ENCODE measurements at regions of chr12 and their contacts with region 1.

Region 1: GRCh38 chr12:116673681-116674111 is 64.2 kb downstream of the SPRING1 start:
- DNase-seq: peak; percentile 45
- ATAC-seq: peak; percentile 15; the same call in 1 of the 2 replicates
- H3K4me3 ChIP-seq: no peak overlapping the region
- H3K27ac ChIP-seq: no peak overlapping the region
- H3K4me1 ChIP-seq: no peaks in the 10 kb centered on the region; the same call in 1 of the 2 replicates
- H3K27me3 ChIP-seq: no peaks in the 10 kb centered on the region
- CTCF ChIP-seq: peak; percentile 66

Region 2: DNA sequence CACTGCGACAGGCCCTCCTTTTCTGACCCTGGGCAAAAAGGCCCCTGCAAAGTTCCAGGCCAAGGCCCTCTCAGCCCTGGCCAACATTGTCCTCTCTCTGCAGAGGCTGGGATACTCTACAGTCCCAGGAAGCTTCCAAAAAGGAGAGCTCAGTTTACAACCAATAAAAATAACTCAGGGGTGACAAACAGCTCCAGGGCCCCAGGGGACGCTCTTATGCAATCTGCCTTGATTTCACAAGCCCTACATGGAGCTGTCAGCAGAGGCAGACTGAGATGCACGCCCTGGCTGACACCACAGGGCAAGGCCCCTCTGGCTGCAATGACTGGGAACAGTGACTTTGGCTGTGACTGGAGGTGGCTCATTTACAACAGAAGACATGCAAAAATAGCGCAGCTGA is 267.2 kb before region 1 on chr12:
- CTCF ChIA-PET with region 1: interaction called, 10 read pairs
- POLR2A ChIA-PET with region 1: no interaction called
- intact Hi-C with region 1: no loop called
- DNase-seq: peak; percentile 99
- ATAC-seq: peak; percentile 97
- H3K4me3 ChIP-seq: no peak overlapping the region
- H3K27ac ChIP-seq: peak overlapping the region; percentile 74
- H3K4me1 ChIP-seq: peaks cover 25% of the 10 kb centered on the region
- H3K27me3 ChIP-seq: no peaks in the 10 kb centered on the region
- CTCF ChIP-seq: peak; percentile 50